Common myeloid progenitor, CD34-positive (primary cell): ENCODE measurements at regions of chrX and their contacts with region 1.

Region 1: GRCh38 chrX:43557792-43558191 is 98.3 kb upstream of the MAOA start:
- DNase-seq: peak; percentile 57 to 77 (median 74)
- H3K4me3 ChIP-seq: no peak overlapping the region
- H3K27ac ChIP-seq: no peak overlapping the region
- H3K4me1 ChIP-seq: no peaks in the 10 kb centered on the region
- H3K27me3 ChIP-seq: peaks cover 0 to 4% (median 0%) of the 10 kb centered on the region in 5 experiments

Region 2: DNA sequence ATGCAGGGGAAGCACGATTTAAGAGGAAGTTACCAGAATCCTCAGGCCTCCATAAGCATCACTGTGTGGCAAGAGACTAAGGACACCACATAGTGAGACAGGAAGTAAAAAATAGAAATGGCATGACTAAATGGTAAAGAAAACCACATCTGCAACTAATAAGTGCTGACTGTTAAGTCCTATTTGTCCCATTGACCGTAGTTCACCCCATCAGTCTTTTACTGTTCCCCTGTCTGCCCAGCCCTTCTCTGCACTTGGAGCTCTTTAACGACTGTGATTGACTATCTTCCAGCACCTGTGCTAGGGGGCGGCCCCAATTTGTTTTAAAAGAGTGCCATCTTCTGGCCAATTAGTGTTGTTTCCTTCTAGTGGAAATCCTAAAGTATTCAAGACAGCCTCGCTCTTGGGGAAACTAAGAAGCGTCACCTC is 192.5 kb after region 1 on chrX:
- CTCF ChIA-PET with region 1: interaction called, 12 read pairs
- POLR2A ChIA-PET with region 1: no interaction called
- DNase-seq: peak; percentile 41 to 72 (median 68)
- H3K4me3 ChIP-seq: no peak overlapping the region
- H3K27ac ChIP-seq: no peak overlapping the region
- H3K4me1 ChIP-seq: no peaks in the 10 kb centered on the region
- H3K27me3 ChIP-seq: no peaks in the 10 kb centered on the region